ENCODE measurements at regions of chr9 and their contacts with region 1.

Region 1: DNA sequence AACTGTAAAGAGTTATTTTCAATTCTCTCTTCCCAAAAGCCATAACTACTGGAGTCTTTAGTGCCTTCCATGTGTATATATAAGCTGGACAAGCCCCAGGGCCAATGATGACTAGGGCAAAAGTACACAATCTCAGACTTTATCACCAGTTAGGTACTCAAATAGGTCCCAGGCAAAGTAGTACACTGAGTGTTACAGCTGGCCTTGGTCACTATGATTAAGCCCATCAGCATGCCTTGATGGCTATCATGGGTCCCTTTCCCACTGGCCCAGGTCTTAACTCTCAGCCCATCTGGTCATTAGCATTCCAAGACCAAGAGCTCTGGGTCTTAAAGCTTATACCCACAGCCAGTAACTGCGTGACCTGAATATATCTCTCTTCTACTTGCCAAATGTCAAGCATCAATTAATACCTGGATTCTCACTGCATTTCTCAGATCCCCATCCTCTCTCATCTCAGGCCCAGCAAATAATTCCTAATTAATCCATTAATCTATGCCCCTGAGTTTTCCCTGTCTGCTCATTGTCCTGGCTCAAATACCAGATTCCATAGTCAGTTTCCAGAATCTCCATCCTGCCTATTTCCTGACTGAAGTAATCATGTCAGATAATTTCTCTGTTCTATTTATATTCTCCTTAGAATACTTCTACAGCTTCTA is 62.3 kb downstream of the NR6A1 start:
- DNase-seq: no peak

Region 2: DNA sequence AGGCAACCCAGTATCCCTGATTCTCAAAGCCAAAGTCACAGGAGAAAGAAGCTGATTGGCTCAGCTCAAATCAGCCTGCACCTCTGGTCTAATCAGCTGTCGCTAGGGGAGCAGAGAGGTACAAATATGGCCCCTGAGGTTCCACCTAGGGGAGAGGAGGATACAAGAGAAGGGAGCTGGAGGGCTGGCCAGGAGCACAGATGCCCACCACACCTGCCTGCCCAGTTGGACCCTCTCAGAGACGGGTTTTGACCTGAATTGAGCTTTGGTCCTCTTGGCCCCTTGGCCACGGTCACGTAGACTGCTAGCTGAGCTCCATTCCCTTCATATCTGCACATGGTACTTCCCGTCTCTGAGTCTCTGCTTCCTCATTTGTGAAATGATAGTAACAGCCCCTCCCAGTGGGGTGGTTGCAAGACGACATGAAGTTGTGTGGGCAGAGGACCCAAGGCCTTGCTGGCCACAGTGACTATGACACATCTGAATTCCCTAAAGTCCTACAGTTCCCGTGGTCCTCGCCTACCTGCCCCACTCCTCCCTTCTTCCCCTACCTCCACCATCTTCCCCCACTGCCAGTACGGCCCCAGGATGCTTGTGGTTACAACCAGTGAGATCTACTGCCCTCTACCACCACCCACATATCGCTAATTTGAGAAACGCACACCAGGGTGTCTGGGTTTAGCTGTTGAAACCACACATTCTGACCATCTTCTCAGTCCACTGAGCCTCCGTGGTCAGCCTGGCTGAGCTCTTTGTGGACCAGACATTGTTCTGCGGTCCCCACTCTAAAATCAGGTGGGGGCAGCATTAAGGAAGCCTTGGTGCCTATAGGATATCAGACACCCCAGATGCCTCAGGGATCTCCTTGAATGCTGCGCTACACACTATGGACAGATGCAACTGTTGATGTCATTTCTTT is 511.3 kb before region 1 on chr9:
- intact Hi-C with region 1: no loop called
- DNase-seq: no peak

Region 3: GRCh38 chr9:124493794-124494479 is 214.8 kb before region 1 on chr9:
- intact Hi-C with region 1: no loop called
- DNase-seq: no peak

Region 4: GRCh38 chr9:124551472-124552272 is 157.1 kb before region 1 on chr9:
- intact Hi-C with region 1: loop called (anchors 5 kb)
- DNase-seq: peak; percentile 31 to 94 (median 58)

Region 5: GRCh38 chr9:124617471-124618141 is 91.2 kb before region 1 on chr9:
- intact Hi-C with region 1: loop called (anchors 1 kb)
- DNase-seq: peak; percentile 55 to 97 (median 87)

Region 6: DNA sequence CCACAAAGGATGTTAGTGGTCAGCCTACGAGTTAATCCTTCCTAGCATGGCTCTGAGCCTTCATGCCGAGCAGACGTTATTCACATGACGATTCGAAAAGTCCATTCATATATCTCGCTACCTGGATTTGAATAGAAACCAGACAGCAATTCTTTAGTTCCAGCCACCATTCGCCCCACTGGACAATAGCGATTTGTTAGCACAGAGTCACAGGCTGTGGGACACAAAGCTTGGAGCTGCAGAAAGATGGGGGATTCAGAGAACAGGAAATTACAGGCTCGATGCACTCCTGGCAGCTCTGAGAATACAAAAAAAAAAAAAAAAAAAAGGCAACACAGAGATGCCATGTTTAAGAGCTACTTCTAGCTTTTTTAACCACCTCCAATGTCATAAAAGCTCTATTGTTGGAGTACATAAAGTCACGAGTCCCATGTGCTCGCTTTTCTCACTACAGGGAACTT is 48.4 kb before region 1 on chr9:
- intact Hi-C with region 1: loop called (anchors 5 kb)
- DNase-seq: peak in 6 of 10 donors; percentile 22 to 86 (median 44)

Measured in posterior cingulate gyrus (tissue), 11 donors.